IMR-90 (cell line): ENCODE measurements at regions of chr13 and their contacts with region 1.

Region 1: GRCh38 chr13:98142380-98143156 is at the start of gene FARP1:
- DNase-seq: peak; percentile 65
- ATAC-seq: peak; percentile 89
- H3K4me3 ChIP-seq: peak within 1 kb of the TSS; percentile 95
- H3K27ac ChIP-seq: peak within 1 kb of the TSS; percentile 90
- H3K4me1 ChIP-seq: peaks cover 8% of the 10 kb centered on the region
- H3K27me3 ChIP-seq: no peaks in the 10 kb centered on the region; the same call in 1 of the 2 replicates
- CTCF ChIP-seq: peak; percentile 66
- POLR2A ChIP-seq: 0 out of 2 replicates have a peak, but pooled peaks have one; percentile 24
- RAD21 ChIP-seq: peak; percentile 75
- total RNA-seq, gene FARP1: 48.3 and 57.0 TPM in 2 replicates

Region 2: GRCh38 chr13:98026457-98026857 is 116.1 kb before region 1 on chr13:
- CTCF ChIA-PET with region 1: no interaction called
- POLR2A ChIA-PET with region 1: no interaction called
- dilution Hi-C with region 1: no loop called
- in situ Hi-C with region 1: no loop called
- intact Hi-C with region 1: loop called (anchors 5 kb)
- DNase-seq: peak; percentile 40
- ATAC-seq: peak; percentile 8; the same call in 1 of the 2 replicates
- H3K4me3 ChIP-seq: no peak overlapping the region
- H3K27ac ChIP-seq: no peak overlapping the region
- H3K4me1 ChIP-seq: peaks cover 11% of the 10 kb centered on the region
- H3K27me3 ChIP-seq: no peaks in the 10 kb centered on the region
- CTCF ChIP-seq: no peak
- POLR2A ChIP-seq: no peak
- RAD21 ChIP-seq: no peak

Region 3: GRCh38 chr13:98206946-98207345 is 64.4 kb after region 1 on chr13:
- CTCF ChIA-PET with region 1: no interaction called
- POLR2A ChIA-PET with region 1: no interaction called
- dilution Hi-C with region 1: no loop called
- in situ Hi-C with region 1: no loop called
- intact Hi-C with region 1: loop called (anchors 2 kb)
- DNase-seq: peak; percentile 99
- ATAC-seq: peak; percentile 80
- H3K4me3 ChIP-seq: no peak overlapping the region
- H3K27ac ChIP-seq: no peak overlapping the region
- H3K4me1 ChIP-seq: peaks cover 23% of the 10 kb centered on the region
- H3K27me3 ChIP-seq: no peaks in the 10 kb centered on the region
- CTCF ChIP-seq: no peak
- POLR2A ChIP-seq: no peak
- RAD21 ChIP-seq: peak; percentile 25; the same call in 1 of the 2 replicates

Region 4: DNA sequence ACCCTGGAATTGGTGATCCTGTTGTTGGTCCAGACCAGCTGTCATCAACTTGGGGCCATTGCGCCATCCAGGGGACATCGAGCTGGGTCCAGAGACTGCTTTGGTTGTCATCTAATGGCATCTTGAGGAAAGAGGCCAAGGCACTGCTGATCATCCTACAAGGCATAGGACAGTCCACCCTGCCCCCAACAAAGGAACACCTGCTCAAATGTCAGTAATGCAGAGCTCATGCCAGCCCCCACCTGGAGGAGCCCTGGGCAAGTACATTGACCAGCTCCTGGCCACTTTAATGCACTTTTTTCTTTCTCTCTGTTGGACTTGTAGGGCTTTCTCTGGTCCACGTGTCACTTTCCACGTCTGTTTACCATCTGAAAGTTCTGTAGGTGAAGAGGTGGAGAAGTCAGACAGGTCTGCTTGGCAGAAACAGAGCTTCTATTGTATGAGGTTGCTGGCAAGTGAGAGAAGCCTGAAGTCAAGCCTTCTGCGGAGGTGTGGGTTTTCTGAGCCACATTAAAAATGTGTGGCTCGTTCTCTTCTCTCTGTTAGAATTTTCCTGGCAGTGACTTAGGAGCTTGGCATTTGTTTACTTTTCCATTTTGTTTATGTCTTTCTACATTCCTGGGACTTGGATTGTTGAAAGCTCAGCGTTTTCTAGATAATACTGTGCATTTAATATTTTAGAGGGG is 158.5 kb after region 1 on chr13:
- CTCF ChIA-PET with region 1: no interaction called
- POLR2A ChIA-PET with region 1: no interaction called
- dilution Hi-C with region 1: no loop called
- in situ Hi-C with region 1: no loop called
- intact Hi-C with region 1: loop called (anchors 5 kb)
- DNase-seq: peak; percentile 82
- ATAC-seq: peak; percentile 66
- H3K4me3 ChIP-seq: peak overlapping the region; percentile 14; the same call in 1 of the 2 replicates
- H3K27ac ChIP-seq: peak overlapping the region; percentile 94
- H3K4me1 ChIP-seq: peaks cover 47% of the 10 kb centered on the region
- H3K27me3 ChIP-seq: no peaks in the 10 kb centered on the region
- CTCF ChIP-seq: no peak
- POLR2A ChIP-seq: no peak
- RAD21 ChIP-seq: no peak

Region 5: GRCh38 chr13:98397221-98397620 is 254.7 kb after region 1 on chr13:
- CTCF ChIA-PET with region 1: no interaction called
- POLR2A ChIA-PET with region 1: no interaction called
- dilution Hi-C with region 1: no loop called
- in situ Hi-C with region 1: loop called (anchors 10 kb)
- intact Hi-C with region 1: loop called (anchors 5 kb)
- DNase-seq: peak; percentile 40
- ATAC-seq: peak; percentile 46; the same call in 1 of the 2 replicates
- H3K4me3 ChIP-seq: no peak overlapping the region
- H3K27ac ChIP-seq: no peak overlapping the region
- H3K4me1 ChIP-seq: peaks cover 6% of the 10 kb centered on the region
- H3K27me3 ChIP-seq: no peaks in the 10 kb centered on the region
- CTCF ChIP-seq: peak; percentile 43
- POLR2A ChIP-seq: no peak
- RAD21 ChIP-seq: peak; percentile 51

Region 6: GRCh38 chr13:98672944-98673545 is 530.5 kb after region 1 on chr13:
- CTCF ChIA-PET with region 1: no interaction called
- POLR2A ChIA-PET with region 1: no interaction called
- dilution Hi-C with region 1: no loop called
- in situ Hi-C with region 1: loop called (anchors 25 kb)
- intact Hi-C with region 1: loop called (anchors 10 kb)
- DNase-seq: peak; percentile 75
- ATAC-seq: peak; percentile 82
- H3K4me3 ChIP-seq: no peak overlapping the region
- H3K27ac ChIP-seq: no peak overlapping the region
- H3K4me1 ChIP-seq: peaks cover 6% of the 10 kb centered on the region; the same call in 1 of the 2 replicates
- H3K27me3 ChIP-seq: peaks cover 16% of the 10 kb centered on the region
- CTCF ChIP-seq: peak; percentile 85
- POLR2A ChIP-seq: no peak
- RAD21 ChIP-seq: peak; percentile 82